ENCODE measurements at regions of chr12 and their contacts with region 1.

Region 1: DNA sequence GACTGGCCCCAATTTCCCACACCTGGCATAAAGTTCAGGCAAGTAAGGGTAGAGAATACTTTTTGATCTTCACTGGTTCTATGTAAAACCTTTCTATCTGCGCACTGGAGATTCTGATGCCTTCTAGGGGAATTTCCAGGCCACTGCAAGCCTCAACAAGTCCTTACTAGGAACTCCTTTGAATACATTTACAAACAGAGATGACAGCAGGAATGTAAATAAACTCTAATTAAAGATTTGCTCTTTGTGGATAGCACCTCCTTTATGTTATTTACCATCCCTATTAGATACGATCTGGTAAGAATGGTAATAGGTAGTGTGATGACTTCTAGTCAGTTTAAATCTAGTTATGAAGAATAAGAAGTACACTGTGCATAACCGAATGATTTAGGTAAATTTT is 69.2 kb downstream of the NTN4 start:
- DNase-seq: no peak
- ATAC-seq: no peak
- H3K4me3 ChIP-seq: no peak overlapping the region
- H3K4me3 Mint-ChIP-seq: no peak overlapping the region
- H3K27ac ChIP-seq: no peak overlapping the region
- H3K27ac Mint-ChIP-seq: no peak overlapping the region
- H3K4me1 ChIP-seq: no peaks in the 10 kb centered on the region
- H3K4me1 Mint-ChIP-seq: no peaks in the 10 kb centered on the region
- H3K27me3 ChIP-seq: no peaks in the 10 kb centered on the region
- H3K27me3 Mint-ChIP-seq: peaks cover 5 to 7% of the 10 kb centered on the region in 2 donors

Region 2: DNA sequence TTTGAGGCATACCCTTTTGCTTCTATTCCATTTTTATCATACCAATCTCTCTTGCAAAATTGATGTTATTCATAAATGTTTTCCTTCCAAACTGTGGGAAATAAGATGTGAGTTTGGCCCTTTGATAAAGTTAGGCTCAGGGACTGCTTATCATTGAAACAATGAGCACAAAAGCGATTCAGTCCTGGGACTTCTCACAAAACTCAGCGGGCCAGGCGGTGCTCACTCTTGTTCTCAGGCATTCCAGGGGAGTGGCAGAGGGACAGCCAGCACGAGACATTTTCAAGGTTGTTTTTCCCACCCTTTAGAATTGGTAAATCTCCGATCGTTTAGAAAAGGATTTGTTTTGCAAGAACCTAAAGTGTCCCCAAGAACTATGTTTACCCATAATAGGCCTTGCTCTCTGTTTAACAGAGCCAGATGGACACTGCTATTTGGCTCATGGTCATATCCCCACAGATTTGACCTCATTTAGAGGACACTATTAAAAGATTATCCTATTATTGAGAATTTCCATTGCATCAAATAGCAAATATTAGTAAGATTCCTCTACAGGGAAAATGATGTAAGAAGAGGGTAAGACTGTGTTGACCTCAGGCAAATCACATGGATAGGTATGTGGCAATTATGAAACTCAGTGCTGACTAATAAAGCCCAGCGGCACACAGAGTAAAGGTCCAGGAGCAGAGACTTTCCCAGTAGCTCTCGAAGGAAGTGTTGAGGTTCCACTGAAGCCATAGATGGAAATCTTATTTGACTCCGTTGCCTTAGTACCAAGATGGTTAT is 67.4 kb before region 1 on chr12:
- CTCF ChIA-PET with region 1: no interaction called
- POLR2A ChIA-PET with region 1: no interaction called
- DNase-seq: peak in 3 of 35 experiments; percentile 3 to 15 (median 5)
- ATAC-seq: peak in 1 of 4 experiments; percentile 8
- H3K4me3 ChIP-seq: no peak overlapping the region
- H3K4me3 Mint-ChIP-seq: no peak overlapping the region
- H3K27ac ChIP-seq: no peak overlapping the region
- H3K27ac Mint-ChIP-seq: peak overlapping the region in 1 of 2 donors; percentile 4
- H3K4me1 ChIP-seq: no peaks in the 10 kb centered on the region
- H3K4me1 Mint-ChIP-seq: no peaks in the 10 kb centered on the region
- H3K27me3 ChIP-seq: no peaks in the 10 kb centered on the region
- H3K27me3 Mint-ChIP-seq: peaks cover 0 to 4% of the 10 kb centered on the region in 2 donors

Region 3: DNA sequence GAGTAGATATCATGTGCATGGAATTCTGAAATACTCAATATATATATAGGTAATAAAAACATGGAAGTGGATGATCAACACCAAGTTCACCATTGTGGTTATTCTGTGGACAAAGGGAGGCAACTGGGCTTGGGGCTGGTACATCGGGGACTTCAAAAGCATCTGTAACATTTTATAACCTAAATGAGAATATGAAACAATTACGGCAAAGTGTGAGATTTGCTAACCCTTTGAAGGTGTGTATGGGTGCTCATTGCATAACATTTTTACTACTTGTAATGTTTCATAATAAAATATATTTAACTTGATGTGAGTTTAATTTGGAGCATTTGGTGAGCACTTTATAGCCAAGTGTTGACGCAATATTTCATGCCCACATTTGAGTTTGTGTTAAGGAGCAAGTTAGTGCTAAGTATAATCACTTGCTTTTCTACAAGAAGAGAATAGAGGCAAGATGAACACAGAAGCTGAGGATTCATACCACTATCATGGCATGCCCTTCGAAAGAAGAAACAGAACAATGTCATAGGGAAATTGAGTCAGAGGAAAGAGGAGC is 40.1 kb before region 1 on chr12:
- CTCF ChIA-PET with region 1: interaction called in 1 of 2 experiments, 4 read pairs
- POLR2A ChIA-PET with region 1: interaction called in 1 of 2 experiments, 11 read pairs
- DNase-seq: no peak
- ATAC-seq: no peak
- H3K4me3 ChIP-seq: no peak overlapping the region
- H3K4me3 Mint-ChIP-seq: no peak overlapping the region
- H3K27ac ChIP-seq: no peak overlapping the region
- H3K27ac Mint-ChIP-seq: no peak overlapping the region
- H3K4me1 ChIP-seq: no peaks in the 10 kb centered on the region
- H3K4me1 Mint-ChIP-seq: no peaks in the 10 kb centered on the region
- H3K27me3 ChIP-seq: no peaks in the 10 kb centered on the region
- H3K27me3 Mint-ChIP-seq: peaks cover 1 to 5% of the 10 kb centered on the region in 2 donors